ENCODE measurements at regions of chr2 and their contacts with region 1.

Region 1: GRCh38 chr2:54038835-54039234 is 68.0 kb upstream of the PSME4 start:
- DNase-seq: no peak
- ATAC-seq: no peak
- H3K4me3 ChIP-seq: no peak overlapping the region
- H3K27ac ChIP-seq: no peak overlapping the region
- H3K4me1 ChIP-seq: peaks cover 7% of the 10 kb centered on the region
- H3K27me3 ChIP-seq: no peaks in the 10 kb centered on the region
- CTCF ChIP-seq: no peak

Region 2: DNA sequence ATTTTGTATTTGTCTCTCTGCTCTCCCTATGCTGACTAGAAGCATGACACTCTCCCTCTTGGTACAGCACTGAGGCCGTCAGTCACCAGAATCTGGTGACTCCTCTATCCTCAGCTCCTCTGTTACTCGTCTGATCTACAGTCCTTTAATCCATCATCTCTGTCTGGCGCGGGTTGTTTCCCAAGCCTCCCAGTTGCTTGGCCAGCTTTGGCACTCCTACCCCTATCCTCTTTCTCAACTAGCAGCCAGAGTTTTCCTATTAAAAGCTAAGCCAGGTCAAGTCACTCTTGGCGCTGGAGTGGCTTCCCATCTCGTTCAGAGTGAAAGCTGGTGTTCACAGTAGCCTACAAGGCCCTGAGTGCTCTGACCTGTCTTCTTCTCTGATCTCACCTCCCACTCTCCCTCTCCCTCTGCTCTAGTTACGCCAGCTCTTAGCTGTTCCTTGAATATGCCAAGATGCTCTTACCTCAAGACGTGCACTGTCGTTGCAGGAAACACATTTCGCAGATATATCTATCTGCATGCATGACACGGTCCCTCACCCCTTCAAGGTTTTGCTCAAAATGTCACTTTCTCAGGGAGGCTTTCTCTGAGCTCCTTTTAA is 26.2 kb before region 1 on chr2:
- CTCF ChIA-PET with region 1: no interaction called
- POLR2A ChIA-PET with region 1: interaction called, 11 read pairs
- in situ Hi-C with region 1: no loop called
- intact Hi-C with region 1: no loop called
- DNase-seq: no peak
- ATAC-seq: peak; percentile 42; the same call in 1 of the 2 replicates
- H3K4me3 ChIP-seq: no peak overlapping the region
- H3K27ac ChIP-seq: no peak overlapping the region
- H3K4me1 ChIP-seq: no peaks in the 10 kb centered on the region
- H3K27me3 ChIP-seq: no peaks in the 10 kb centered on the region
- CTCF ChIP-seq: no peak

Measured in Panc1 (cell line).